K562 (cell line): ENCODE measurements at regions of chr7 and their contacts with region 1.

Region 1: GRCh38 chr7:32957326-32958045 is at the start of gene FKBP9:
- DNase-seq: peak; percentile 86 to 95 (median 94)
- ATAC-seq: peak; percentile 95
- H3K4me3 ChIP-seq: peak within 1 kb of the TSS; percentile 90
- H3K27ac ChIP-seq: peak within 1 kb of the TSS; percentile 70
- H3K4me1 ChIP-seq: peaks cover 4 to 22% of the 10 kb centered on the region in 2 experiments; a peak in 4 of 5 replicates
- H3K27me3 ChIP-seq: no peaks in the 10 kb centered on the region
- CTCF ChIP-seq: no peak
- EP300 ChIP-seq: no peak
- POLR2A ChIP-seq: peak; percentile 70
- RAD21 ChIP-seq: no peak
- polyA plus RNA-seq, gene FKBP9: 5.9 to 8.1 TPM

Region 2: DNA sequence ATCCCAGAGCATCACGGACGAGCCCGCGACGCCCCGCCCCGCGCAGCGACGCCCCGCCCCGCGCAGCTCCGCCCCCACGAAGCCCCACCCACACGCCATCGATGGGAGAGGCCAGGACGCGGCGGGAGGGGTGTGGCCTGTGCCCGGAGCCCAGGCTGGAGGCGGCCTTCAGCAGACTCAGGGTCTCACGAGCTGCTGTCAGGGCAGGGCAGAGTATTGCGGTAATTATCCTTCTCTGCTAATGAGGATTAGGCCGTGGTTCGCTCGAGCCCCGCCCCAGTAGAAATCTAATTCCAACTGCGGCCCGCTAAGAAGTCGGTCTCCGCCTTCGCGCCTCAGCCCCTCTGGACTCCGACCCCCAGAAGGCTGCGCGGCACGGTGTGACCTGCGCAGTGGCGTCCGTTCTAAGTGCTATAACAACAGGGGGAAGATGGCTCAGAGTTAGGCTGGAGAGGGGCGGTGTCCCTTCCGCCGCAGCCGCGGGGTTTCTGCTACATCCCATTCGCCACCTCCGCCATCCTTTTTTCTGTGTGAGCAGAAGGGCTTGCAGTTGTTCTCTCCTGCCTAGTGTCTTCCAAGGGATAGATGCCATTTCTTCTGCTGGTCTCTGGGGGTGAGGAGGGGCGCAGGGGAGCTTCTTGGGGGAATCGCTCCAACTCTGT is 105.4 kb after region 1 on chr7:
- CTCF ChIA-PET with region 1: no interaction called
- POLR2A ChIA-PET with region 1: interaction called, 3 read pairs
- in situ Hi-C with region 1: no loop called
- intact Hi-C with region 1: loop called (anchors 5 kb)
- DNase-seq: peak; percentile 95 to 97 (median 96)
- ATAC-seq: peak; percentile 96
- H3K4me3 ChIP-seq: peak overlapping the region; percentile 90
- H3K27ac ChIP-seq: peak overlapping the region; percentile 94
- H3K4me1 ChIP-seq: peaks cover 7 to 20% of the 10 kb centered on the region in 2 experiments; a peak in 3 of 5 replicates
- H3K27me3 ChIP-seq: no peaks in the 10 kb centered on the region
- CTCF ChIP-seq: no peak
- EP300 ChIP-seq: no peak
- POLR2A ChIP-seq: peak; percentile 82
- RAD21 ChIP-seq: no peak

Region 3: DNA sequence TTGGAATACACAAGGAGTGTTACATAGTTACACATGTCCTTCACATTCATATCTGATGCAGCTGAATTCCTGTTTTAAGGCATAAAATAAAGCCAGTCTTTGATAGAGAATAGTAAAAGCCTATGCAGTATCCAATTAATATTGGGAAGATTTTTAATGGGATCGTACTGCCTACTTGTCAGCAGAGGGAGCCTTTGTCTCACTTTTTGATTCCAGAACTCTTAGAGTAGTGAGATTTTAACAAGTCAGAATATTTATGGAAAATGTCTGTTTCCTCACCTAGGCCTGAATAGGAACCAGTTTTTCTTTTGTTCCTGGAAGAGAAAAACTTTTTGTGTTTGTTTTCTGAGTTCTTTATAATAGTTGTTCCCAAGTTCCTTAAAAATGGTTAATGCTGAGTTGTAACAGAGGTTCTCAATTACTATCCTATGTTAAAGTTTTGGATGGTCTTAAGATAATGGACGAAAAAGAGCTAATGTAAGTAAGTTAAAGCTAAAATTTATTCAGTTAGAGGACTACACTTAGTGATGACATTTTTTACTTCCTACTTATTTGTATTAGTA is 285.9 kb after region 1 on chr7:
- CTCF ChIA-PET with region 1: no interaction called
- POLR2A ChIA-PET with region 1: no interaction called
- in situ Hi-C with region 1: no loop called
- intact Hi-C with region 1: no loop called
- DNase-seq: peak; percentile 12 to 53 (median 32)
- ATAC-seq: peak; percentile 84
- H3K4me3 ChIP-seq: no peak overlapping the region
- H3K27ac ChIP-seq: no peak overlapping the region
- H3K4me1 ChIP-seq: no peaks in the 10 kb centered on the region
- H3K27me3 ChIP-seq: no peaks in the 10 kb centered on the region
- CTCF ChIP-seq: peak in 2 of 3 experiments; percentile 53 to 79; a peak in 4 of 6 replicates
- EP300 ChIP-seq: no peak
- POLR2A ChIP-seq: no peak
- RAD21 ChIP-seq: peak; percentile 66 to 81